Keratinocyte (primary cell): ENCODE measurements at regions of chr12 and their contacts with region 1.

Region 1: GRCh38 chr12:5060958-5061357 is 17.3 kb downstream of the KCNA5 start:
- DNase-seq: no peak
- H3K4me3 ChIP-seq: no peak overlapping the region
- H3K27ac ChIP-seq: no peak overlapping the region
- H3K4me1 ChIP-seq: no peaks in the 10 kb centered on the region
- H3K27me3 ChIP-seq: peaks cover 8% of the 10 kb centered on the region
- CTCF ChIP-seq: no peak

Region 2: GRCh38 chr12:5473076-5473782 is 412.3 kb after region 1 on chr12:
- dilution Hi-C with region 1: no loop called
- DNase-seq: no peak
- H3K4me3 ChIP-seq: no peak overlapping the region
- H3K27ac ChIP-seq: no peak overlapping the region
- H3K4me1 ChIP-seq: no peaks in the 10 kb centered on the region
- H3K27me3 ChIP-seq: peaks cover 5% of the 10 kb centered on the region
- CTCF ChIP-seq: no peak

Region 3: GRCh38 chr12:5499566-5500330 is 438.8 kb after region 1 on chr12:
- dilution Hi-C with region 1: loop called (anchors 10 kb)
- DNase-seq: no peak
- H3K4me3 ChIP-seq: no peak overlapping the region
- H3K27ac ChIP-seq: no peak overlapping the region
- H3K4me1 ChIP-seq: peaks cover 12% of the 10 kb centered on the region
- H3K27me3 ChIP-seq: no peaks in the 10 kb centered on the region
- CTCF ChIP-seq: no peak